MCF 10A (cell line): ENCODE measurements at regions of chr16 and their contacts with region 1.

Region 1: GRCh38 chr16:57648590-57649442 is 19.3 kb upstream of the ADGRG3 start:
- DNase-seq: peak; percentile 85
- H3K4me3 Mint-ChIP-seq: no peak overlapping the region
- H3K27ac Mint-ChIP-seq: no peak overlapping the region
- H3K4me1 Mint-ChIP-seq: no peaks in the 10 kb centered on the region
- H3K27me3 Mint-ChIP-seq: no peaks in the 10 kb centered on the region
- CTCF ChIP-seq: peak; percentile 100

Region 2: DNA sequence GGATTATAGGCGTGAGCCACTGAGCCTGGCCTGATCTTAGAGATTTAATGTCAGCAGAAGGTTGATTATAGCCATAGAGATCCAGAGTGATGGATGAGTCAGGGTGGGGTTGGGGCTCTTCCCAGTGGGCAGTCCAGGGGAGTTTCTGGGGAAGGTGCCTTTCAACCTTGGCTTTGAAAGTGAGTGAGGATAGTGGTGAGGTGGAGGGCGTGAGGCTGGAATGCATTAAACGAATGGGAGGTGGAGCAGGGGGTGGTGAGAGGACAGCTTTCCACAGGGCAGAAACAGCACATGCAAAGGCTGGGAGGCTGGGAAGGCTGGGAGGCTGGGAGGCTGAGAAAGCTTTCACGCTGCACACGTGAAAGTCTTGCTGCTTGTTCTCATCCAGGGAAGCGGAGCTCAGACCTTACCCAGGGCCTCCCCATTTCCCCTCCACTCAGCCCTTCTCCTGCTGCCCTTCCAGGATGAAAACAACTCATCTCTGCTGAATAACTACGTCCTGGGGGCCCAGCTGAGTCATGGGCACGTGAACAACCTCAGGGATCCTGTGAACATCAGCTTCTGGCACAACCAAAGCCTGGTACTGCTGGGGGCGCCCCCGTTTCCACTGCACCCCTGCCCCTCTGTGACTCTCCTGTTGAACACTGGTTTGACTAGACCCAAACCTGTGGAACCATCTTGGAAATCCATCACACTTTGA is 84.1 kb before region 1 on chr16:
- CTCF ChIA-PET with region 1: interaction called, 11 read pairs
- POLR2A ChIA-PET with region 1: no interaction called
- intact Hi-C with region 1: no loop called
- DNase-seq: peak; percentile 32
- H3K4me3 Mint-ChIP-seq: no peak overlapping the region
- H3K27ac Mint-ChIP-seq: no peak overlapping the region
- H3K4me1 Mint-ChIP-seq: peaks cover 10% of the 10 kb centered on the region
- H3K27me3 Mint-ChIP-seq: peaks cover 38% of the 10 kb centered on the region
- CTCF ChIP-seq: no peak

Region 3: DNA sequence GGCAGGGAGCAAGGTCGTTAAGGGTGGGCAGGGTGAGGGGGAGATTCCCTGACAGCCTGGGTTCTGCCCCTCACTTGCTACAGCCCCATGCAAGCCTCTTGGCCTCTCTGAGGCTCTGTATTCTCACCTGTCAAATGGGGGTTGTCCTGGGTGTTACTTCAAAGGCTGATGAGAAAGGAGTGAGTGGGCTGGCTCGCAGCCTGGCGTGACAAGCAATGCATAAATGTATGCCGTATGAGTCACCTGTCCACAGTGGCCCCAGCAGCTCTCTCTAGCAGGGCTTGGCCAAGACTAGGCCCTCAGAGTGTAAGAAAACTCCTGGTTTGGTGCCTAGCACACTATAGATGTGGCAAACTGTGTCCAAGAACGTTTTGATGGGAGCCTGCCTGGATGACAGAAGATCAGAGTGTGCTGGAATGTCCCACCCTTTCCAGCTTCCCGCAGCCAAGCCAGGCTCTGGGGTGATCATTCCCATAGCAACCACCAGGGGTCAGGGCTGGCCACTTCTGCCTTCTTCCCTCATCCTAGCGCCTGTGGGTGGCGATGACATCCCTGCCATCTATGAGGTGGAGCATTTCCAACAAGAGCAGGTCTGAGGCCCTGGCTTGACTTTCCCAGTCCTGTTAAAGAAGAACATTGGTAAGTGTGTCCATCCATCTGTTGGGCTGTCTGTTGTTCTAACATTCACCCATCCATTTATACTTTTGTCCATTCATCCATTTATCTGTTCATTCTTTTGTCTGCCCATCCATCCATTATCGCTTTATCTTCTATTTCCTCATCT is 57.5 kb before region 1 on chr16:
- CTCF ChIA-PET with region 1: interaction called, 72 read pairs
- POLR2A ChIA-PET with region 1: interaction called, 9 read pairs
- intact Hi-C with region 1: loop called (anchors 1 kb)
- DNase-seq: peak; percentile 87
- H3K4me3 Mint-ChIP-seq: no peak overlapping the region
- H3K27ac Mint-ChIP-seq: peak overlapping the region; percentile 36
- H3K4me1 Mint-ChIP-seq: peaks cover 14% of the 10 kb centered on the region
- H3K27me3 Mint-ChIP-seq: no peaks in the 10 kb centered on the region
- CTCF ChIP-seq: peak; percentile 88

Region 4: GRCh38 chr16:57609541-57610401 is 39.0 kb before region 1 on chr16:
- CTCF ChIA-PET with region 1: interaction called, 141 read pairs
- POLR2A ChIA-PET with region 1: no interaction called
- intact Hi-C with region 1: no loop called
- DNase-seq: no peak
- H3K4me3 Mint-ChIP-seq: no peak overlapping the region
- H3K27ac Mint-ChIP-seq: no peak overlapping the region
- H3K4me1 Mint-ChIP-seq: peaks cover 13% of the 10 kb centered on the region
- H3K27me3 Mint-ChIP-seq: no peaks in the 10 kb centered on the region
- CTCF ChIP-seq: no peak

Region 5: GRCh38 chr16:57672824-57673223 is 24.0 kb after region 1 on chr16:
- CTCF ChIA-PET with region 1: interaction called, 12 read pairs
- POLR2A ChIA-PET with region 1: no interaction called
- intact Hi-C with region 1: no loop called
- DNase-seq: no peak
- H3K4me3 Mint-ChIP-seq: no peak overlapping the region
- H3K27ac Mint-ChIP-seq: no peak overlapping the region
- H3K4me1 Mint-ChIP-seq: peaks cover 11% of the 10 kb centered on the region
- H3K27me3 Mint-ChIP-seq: peaks cover 20% of the 10 kb centered on the region
- CTCF ChIP-seq: no peak

Region 6: DNA sequence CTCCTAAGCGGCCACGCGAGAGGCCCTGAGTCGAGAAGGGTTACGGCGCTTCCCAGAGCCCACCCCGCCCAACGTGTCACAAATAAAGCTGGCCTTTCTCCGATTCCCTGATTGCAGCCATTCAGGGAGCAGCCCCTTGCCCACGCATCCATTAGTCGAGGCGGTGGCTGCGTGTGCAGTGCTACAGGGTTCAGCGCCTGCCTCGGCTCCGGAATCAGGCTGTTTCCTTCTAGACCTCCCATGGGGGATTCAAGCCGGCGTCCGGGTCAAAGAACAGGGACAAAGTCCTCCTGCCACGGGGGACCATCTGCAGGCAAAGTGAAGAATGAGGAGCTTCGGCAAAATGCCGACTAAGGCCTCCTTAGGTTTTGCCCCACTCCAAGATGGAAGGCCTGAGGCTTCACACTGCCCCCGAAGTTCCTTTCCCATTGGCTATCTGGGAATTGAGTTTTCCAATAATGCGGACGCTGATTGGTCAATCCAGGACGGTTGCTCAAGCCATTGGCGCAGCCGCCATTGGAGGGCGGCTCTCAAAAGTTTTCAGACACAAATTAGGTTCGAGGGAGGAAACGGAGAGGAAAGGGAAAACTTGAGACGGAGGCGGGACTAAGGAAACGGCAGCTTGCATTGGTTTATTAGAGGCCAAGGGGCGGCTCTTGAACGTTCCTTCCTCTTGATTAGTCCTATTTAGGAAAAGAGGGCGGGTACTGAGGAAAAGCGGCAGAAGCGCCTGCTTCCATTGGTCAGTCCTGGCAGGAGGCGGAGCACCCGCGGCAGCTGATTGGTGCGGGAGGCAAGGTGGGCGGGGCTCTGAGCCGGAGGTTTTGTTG is 86.3 kb after region 1 on chr16:
- CTCF ChIA-PET with region 1: interaction called, 16 read pairs
- POLR2A ChIA-PET with region 1: no interaction called
- intact Hi-C with region 1: no loop called
- DNase-seq: peak; percentile 100
- H3K4me3 Mint-ChIP-seq: peak overlapping the region; percentile 93
- H3K27ac Mint-ChIP-seq: peak overlapping the region; percentile 96
- H3K4me1 Mint-ChIP-seq: peaks cover 23% of the 10 kb centered on the region
- H3K27me3 Mint-ChIP-seq: no peaks in the 10 kb centered on the region
- CTCF ChIP-seq: no peak

Region 7: DNA sequence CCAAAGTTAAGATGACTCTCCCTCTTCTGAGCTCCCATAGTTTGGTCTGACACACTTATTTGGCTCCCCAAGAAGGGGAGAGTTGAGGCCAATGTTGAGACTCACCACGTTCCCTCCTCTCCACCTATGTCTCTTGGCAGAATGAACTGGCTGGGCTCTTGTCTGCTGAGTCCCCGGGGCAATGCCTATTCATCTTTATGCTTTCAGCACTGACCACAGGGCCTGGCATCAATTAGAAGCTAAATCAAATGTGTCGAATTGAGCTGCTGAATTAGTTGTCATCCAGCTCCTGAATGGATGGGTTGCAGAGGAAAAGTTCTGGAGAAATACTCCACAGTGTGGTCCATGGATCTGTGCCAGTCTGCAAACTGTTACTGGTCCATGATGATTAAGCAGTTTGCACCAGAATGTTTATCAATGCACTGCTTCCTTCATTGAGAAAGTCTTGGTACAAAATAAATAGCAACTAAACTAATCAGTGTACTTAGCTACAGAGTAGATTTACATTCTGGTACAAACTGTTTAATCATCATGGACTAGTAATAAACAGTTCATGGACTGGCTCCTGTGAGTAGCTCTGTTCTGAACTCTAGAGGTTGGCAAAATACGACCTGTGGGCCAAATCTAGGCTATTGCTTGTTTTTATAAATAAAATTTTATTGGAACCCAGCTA is 317.5 kb after region 1 on chr16:
- CTCF ChIA-PET with region 1: no interaction called
- POLR2A ChIA-PET with region 1: no interaction called
- intact Hi-C with region 1: no loop called
- DNase-seq: peak; percentile 18
- H3K4me3 Mint-ChIP-seq: no peak overlapping the region
- H3K27ac Mint-ChIP-seq: no peak overlapping the region
- H3K4me1 Mint-ChIP-seq: peaks cover 6% of the 10 kb centered on the region
- H3K27me3 Mint-ChIP-seq: no peaks in the 10 kb centered on the region
- CTCF ChIP-seq: no peak